Ovary (tissue), 10 donors: ENCODE measurements at regions of chr3 and their contacts with region 1.

Region 1: DNA sequence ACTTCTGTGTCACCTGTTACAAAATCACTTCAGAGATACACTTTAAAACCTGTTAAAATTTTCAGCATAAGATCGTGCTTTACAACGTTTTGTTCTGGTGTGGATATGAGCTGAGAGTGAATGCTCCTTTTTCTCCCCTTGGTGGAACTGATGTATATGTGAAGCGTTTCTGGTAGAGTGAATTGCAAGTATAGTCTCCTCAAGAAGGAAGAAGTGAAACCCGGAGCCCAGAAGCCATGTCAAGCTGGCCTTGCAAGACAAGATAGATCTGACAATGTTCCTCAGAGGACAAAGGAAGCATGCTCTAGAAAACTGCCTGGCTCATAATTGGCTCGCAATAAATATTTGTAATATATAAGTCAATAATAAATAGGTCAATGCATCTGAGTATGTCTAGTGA is 23.6 kb downstream of the SERPINI2 start:
- DNase-seq: no peak
- H3K4me3 ChIP-seq: no peak overlapping the region
- H3K27ac ChIP-seq: no peak overlapping the region
- H3K4me1 ChIP-seq: no peaks in the 10 kb centered on the region
- H3K27me3 ChIP-seq: no peaks in the 10 kb centered on the region
- CTCF ChIP-seq: no peak
- EP300 ChIP-seq: no peak
- POLR2A ChIP-seq: no peak

Region 2: GRCh38 chr3:167361306-167361705 is 88.9 kb before region 1 on chr3:
- intact Hi-C with region 1: no loop called
- DNase-seq: no peak
- H3K4me3 ChIP-seq: no peak overlapping the region
- H3K27ac ChIP-seq: no peak overlapping the region
- H3K4me1 ChIP-seq: no peaks in the 10 kb centered on the region
- H3K27me3 ChIP-seq: no peaks in the 10 kb centered on the region
- CTCF ChIP-seq: no peak
- EP300 ChIP-seq: no peak
- POLR2A ChIP-seq: no peak

Region 3: GRCh38 chr3:167669699-167670098 is 219.5 kb after region 1 on chr3:
- intact Hi-C with region 1: loop called in 1 of 4 experiments (anchors 2 kb)
- DNase-seq: no peak
- H3K4me3 ChIP-seq: no peak overlapping the region
- H3K27ac ChIP-seq: no peak overlapping the region
- H3K4me1 ChIP-seq: no peaks in the 10 kb centered on the region
- H3K27me3 ChIP-seq: no peaks in the 10 kb centered on the region
- CTCF ChIP-seq: no peak
- EP300 ChIP-seq: no peak
- POLR2A ChIP-seq: no peak

Region 4: DNA sequence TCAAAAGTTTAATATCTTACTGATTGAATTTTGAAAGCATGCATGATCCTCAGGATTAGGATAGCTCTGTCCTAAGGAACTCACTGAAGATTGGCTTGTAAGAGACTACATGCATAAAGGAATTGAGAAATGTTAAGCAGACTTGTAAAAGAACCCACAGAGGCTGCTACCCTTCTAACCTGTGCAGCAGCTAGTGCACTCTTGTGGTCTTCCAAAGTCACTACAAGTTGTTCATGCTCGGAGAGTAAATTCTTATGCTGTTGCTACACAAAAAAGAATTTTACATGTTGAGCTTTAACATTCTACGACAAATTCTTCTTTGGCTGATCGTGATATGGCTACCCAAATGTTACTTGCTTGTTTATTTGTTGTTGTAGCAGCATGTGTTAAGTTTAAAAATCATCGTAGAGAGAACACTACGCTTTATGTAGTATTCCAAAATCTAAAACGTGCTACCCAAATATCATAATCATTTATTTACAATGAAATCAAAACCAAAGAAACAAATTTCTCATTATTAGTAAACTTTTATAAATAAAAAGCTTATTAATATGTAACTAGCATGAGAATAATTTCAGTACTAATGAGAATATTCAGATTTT is 590.5 kb after region 1 on chr3:
- intact Hi-C with region 1: no loop called
- DNase-seq: no peak
- H3K4me3 ChIP-seq: no peak overlapping the region
- H3K27ac ChIP-seq: no peak overlapping the region
- H3K4me1 ChIP-seq: no peaks in the 10 kb centered on the region
- H3K27me3 ChIP-seq: no peaks in the 10 kb centered on the region
- CTCF ChIP-seq: no peak
- EP300 ChIP-seq: no peak
- POLR2A ChIP-seq: no peak

Region 5: DNA sequence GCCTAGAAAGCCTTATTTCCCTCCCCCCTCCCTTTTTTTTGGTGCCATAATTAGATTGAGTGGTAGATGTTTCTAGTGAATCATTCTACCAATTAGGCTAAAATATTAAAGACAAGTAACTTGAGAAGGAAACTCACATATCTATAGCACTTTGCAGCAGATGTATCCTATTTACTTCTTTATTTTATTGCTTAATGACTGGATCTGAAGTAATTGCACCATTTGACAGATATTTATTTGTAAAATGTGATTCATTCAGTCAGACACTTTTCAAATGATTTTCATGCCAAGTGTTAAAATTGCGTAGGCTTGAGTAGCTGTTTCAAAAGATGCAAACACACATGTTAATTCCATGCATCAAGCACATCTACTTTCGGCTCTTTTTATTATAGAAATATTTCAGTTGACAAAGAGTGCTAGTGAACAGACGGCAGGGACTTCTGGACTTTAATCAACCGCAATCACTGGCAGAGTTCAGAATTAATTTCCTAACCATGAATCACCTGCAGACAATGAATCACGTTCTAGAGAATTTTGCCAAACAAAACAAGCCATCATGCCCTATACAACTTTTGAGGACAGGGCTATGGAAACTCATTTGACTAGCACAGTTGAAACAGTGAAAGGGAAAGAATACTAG is 1576.5 kb after region 1 on chr3:
- intact Hi-C with region 1: no loop called
- DNase-seq: no peak
- H3K4me3 ChIP-seq: no peak overlapping the region
- H3K27ac ChIP-seq: no peak overlapping the region
- H3K4me1 ChIP-seq: no peaks in the 10 kb centered on the region
- H3K27me3 ChIP-seq: no peaks in the 10 kb centered on the region
- CTCF ChIP-seq: no peak
- EP300 ChIP-seq: no peak
- POLR2A ChIP-seq: no peak